ENCODE measurements at regions of chr2 and their contacts with region 1.

Region 1: DNA sequence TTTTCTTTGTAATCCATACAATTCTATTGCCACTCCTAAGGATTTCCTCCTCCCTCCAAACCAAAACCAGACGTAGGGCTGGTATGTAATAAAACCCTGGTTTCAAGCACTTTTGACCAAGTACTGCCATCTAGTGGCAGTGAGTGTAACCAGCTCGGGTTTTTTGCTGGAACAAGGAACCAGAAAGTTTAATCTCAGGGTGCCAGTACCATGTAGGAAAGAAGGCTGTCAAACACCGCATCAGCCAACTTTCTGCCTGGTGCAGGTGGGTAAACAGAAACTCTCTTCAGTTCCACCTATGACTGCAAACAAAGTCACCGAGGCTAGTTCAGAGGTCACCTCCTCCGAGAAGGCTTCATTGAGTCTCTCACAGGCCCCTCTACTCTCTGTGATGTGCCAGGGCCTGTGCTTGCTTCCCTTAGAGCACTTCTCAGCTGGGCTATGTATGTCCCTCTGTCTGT is 10.2 kb upstream of the THNSL2 start:
- DNase-seq: peak in 2 of 5 donors; percentile 33 to 51
- H3K4me3 ChIP-seq: no peak overlapping the region
- H3K27ac ChIP-seq: no peak overlapping the region
- H3K4me1 ChIP-seq: no peaks in the 10 kb centered on the region
- H3K27me3 ChIP-seq: no peaks in the 10 kb centered on the region
- CTCF ChIP-seq: peak; percentile 47 to 68 (median 58)
- EP300 ChIP-seq: no peak
- POLR2A ChIP-seq: no peak

Region 2: GRCh38 chr2:88003074-88003755 is 156.8 kb before region 1 on chr2:
- intact Hi-C with region 1: no loop called
- DNase-seq: peak in 1 of 5 donors; percentile 38
- H3K4me3 ChIP-seq: no peak overlapping the region
- H3K27ac ChIP-seq: no peak overlapping the region
- H3K4me1 ChIP-seq: no peaks in the 10 kb centered on the region
- H3K27me3 ChIP-seq: no peaks in the 10 kb centered on the region
- CTCF ChIP-seq: no peak
- EP300 ChIP-seq: no peak
- POLR2A ChIP-seq: no peak

Region 3: DNA sequence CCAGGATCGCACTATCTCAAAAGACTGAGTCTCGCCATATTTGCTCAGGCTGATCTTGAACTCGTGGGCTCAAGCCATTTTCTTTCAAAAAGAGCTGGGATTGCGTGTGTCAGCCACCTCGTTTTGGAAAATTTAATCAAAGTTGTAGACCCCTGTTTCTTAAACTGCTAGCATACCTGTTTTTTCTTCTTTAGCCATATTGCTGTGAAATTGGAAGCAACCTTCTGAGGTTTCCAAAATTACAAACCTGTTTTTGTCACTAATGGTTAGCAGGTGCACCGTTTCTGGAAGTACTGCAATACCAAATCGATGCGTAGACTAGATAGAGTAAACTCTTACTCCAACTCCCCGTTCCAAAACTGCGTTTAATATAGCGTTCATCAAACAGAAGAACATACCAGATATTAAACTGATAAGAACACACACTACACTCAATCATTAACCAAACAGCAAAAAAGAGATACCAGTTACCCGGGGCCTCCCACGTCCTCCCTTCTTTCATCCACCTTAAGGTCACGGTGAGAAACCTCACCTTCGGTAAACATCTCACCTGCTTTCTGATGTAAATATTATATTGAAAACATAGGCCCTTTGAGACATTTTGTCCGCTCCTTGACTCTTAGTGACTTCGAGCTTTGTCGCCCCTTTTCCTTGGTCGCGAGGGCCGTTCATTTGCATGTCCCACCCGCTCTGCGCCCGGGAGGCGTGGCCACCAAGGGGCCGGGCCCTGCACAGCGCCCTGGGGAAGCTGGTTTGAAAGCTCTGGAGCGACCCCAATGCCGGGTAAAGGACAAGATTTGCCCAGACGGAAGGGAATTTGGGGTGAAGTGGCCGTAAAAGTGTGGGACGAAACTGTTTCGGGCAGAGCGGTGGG is 143.7 kb before region 1 on chr2 and contains the start of gene RNU2-63P:
- intact Hi-C with region 1: loop called in 1 of 4 experiments (anchors 10 kb)
- DNase-seq: peak; percentile 62 to 80 (median 76)
- H3K4me3 ChIP-seq: peak within 1 kb of the TSS; percentile 53
- H3K27ac ChIP-seq: no peak within 1 kb of the TSS
- H3K4me1 ChIP-seq: no peaks in the 10 kb centered on the region
- H3K27me3 ChIP-seq: no peaks in the 10 kb centered on the region
- CTCF ChIP-seq: no peak
- EP300 ChIP-seq: no peak
- POLR2A ChIP-seq: no peak
- total RNA-seq, gene RNU2-63P: 2.3 to 8.3 TPM in 2 of 7 donors, not detected in the others

Region 4: DNA sequence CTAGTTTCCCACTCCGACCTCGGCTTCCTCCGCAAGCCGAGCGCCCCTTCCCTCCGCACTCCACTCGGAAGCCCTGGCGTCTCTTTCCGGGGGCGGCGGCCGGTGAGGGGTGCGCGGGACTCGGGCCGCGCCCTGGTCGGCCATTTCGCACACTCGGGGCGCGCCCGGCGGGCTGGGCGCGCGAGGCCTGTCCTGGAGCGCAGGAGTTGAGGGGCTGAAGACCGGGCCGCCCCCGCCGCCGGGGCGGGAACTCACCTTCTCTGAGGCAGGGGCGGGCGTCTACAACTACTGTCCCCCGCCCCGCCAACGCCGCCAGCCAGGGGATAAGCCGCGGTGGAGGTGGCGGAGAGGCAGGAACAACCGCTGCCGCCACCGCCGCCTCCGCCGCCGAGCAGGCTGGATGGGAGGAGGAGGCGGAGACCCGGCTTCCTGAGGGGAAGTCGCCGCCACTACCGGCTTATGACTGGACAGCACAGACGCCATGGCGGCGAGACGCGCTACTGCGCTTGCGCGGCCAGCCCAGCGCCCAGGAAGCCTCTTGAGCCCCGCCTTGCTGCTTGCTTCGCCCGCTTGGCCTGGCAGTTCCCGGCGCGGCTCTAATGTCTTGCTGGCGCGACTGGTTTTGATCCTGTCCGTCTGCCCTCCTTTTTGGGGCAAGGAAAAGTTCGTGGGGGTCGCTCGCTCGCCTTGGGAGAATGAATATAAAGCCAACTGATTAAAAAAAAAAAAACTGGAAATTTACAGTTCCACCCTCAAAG is 104.4 kb before region 1 on chr2 and contains the start of gene KRCC1:
- intact Hi-C with region 1: loop called in 2 of 4 experiments (anchors 10 kb)
- DNase-seq: peak; percentile 91 to 95 (median 93)
- H3K4me3 ChIP-seq: peak within 1 kb of the TSS; percentile 95
- H3K27ac ChIP-seq: peak within 1 kb of the TSS; percentile 95 to 96
- H3K4me1 ChIP-seq: peaks cover 7% of the 10 kb centered on the region
- H3K27me3 ChIP-seq: no peaks in the 10 kb centered on the region
- CTCF ChIP-seq: no peak
- EP300 ChIP-seq: no peak
- POLR2A ChIP-seq: peak; percentile 86
- total RNA-seq, gene KRCC1: 17.1 to 24.2 (median 21.4) TPM

Region 5: DNA sequence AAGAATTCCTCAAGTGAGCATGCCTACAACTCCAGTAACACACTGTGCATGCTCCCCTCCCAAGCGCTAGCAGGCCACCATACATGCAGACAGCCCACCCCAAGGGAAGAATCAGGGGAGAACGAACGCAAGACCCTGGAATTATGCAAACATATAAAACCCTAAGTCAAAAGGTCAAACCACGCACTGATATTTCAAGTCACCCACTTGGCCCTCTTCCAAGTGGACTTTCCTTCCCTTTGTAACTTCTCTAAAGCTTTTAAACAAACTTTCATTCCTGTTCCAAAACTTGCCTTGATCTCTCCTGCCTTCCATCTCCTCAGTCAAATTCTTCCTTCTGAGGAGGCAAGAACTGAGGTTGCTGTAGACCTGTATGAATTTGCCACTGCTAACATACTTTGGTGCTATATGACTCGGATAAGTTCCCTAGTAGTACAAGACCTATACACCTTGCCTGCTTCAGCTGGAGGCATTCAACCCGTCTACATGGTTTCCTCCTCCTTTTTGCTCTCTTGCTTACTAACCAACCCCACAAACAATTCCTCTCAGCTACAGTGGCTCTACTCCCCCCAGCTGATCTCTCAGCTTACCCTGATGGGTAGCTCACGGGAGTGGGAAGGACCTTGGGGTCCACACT is 520.4 kb after region 1 on chr2:
- intact Hi-C with region 1: no loop called
- DNase-seq: no peak
- H3K4me3 ChIP-seq: no peak overlapping the region
- H3K27ac ChIP-seq: peak overlapping the region in 1 of 2 donors; percentile 67
- H3K4me1 ChIP-seq: peaks cover 5% of the 10 kb centered on the region
- H3K27me3 ChIP-seq: no peaks in the 10 kb centered on the region
- CTCF ChIP-seq: no peak
- EP300 ChIP-seq: no peak
- POLR2A ChIP-seq: no peak

Measured in ovary (tissue), 10 donors.